HEK293 (cell line): ENCODE measurements at regions of chr1 and their contacts with region 1.

Region 1: GRCh38 chr1:59971464-59971911 is 44.9 kb upstream of the CYP2J2 start:
- H3K4me3 ChIP-seq: no peak overlapping the region
- H3K27ac ChIP-seq: no peak overlapping the region
- H3K4me1 ChIP-seq: no peaks in the 10 kb centered on the region
- CTCF ChIP-seq: peak; percentile 89

Region 2: DNA sequence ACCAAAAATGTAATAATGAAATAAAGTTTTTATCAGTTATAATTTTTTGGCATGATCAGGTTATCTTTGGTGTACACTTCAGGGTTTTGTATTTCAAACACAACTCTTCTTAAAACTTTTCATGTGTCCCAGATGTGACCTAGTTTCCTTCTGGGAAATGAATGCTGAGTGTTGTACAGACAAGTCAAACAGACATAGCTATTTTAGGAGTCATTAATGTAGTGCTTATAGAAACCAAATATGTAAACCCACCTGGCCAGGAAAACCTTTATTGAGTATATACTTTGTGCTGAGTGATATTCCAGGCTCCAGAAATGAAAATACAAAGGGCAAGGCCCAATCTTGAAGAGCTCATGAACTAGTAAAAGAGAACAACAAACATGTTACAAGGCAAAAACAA is 182.7 kb before region 1 on chr1:
- CTCF ChIA-PET with region 1: no interaction called
- POLR2A ChIA-PET with region 1: no interaction called
- H3K4me3 ChIP-seq: no peak overlapping the region
- H3K27ac ChIP-seq: no peak overlapping the region
- H3K4me1 ChIP-seq: no peaks in the 10 kb centered on the region
- CTCF ChIP-seq: no peak

Region 3: DNA sequence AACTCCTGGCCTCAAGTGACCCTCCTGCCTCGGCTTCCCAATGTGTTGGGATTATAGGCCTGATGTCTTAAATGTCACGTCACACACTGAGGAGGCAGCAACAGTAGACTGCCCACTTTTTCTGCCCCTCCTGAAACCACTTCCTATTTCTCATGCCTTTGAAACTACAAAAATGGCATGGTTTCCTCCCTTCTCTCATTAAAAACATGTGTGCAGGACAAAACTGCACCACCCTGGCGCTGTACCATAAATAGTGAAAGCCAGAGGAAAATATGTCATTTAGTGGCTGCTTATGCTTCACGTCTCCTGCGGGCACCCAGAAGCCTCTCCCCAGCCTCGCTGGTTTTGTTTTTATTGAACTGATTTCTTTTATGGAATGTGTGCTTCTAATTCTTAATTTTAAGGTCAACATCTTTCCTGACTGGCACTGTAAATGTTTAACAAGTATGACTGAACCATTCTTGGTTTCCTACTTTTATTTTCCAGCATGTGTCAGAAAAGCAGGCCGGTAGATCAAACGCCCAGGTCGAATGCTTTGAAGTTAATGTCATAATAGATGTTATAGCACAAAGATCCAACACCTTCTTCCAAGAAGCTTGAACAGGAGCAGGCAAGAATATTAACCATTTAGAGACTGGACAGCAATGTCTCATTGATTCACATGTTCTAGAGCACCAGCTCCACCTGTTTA is 161.6 kb after region 1 on chr1:
- CTCF ChIA-PET with region 1: interaction called, 10 read pairs
- POLR2A ChIA-PET with region 1: no interaction called
- H3K4me3 ChIP-seq: no peak overlapping the region
- H3K27ac ChIP-seq: no peak overlapping the region
- H3K4me1 ChIP-seq: no peaks in the 10 kb centered on the region
- CTCF ChIP-seq: no peak

Region 4: DNA sequence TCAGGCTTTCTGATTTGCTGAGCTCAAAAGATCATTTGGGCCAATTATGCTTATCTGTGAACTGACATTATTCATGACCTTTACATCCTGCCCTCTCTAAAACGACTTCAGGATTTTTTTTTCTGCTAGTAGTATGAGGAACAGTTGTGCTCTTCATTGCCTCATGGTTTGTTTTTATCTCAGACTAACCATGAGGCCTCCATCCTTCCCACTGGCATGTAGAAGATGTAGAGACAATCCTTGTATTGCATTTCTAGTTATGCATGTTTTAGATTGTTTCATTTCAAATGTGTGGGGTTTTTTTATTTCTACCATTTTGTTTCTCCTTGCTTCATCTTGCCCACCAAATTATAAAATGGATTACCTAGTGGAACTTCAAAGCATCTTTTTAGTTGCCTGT is 184.9 kb after region 1 on chr1:
- CTCF ChIA-PET with region 1: interaction called, 10 read pairs
- POLR2A ChIA-PET with region 1: no interaction called
- H3K4me3 ChIP-seq: no peak overlapping the region
- H3K27ac ChIP-seq: no peak overlapping the region
- H3K4me1 ChIP-seq: no peaks in the 10 kb centered on the region
- CTCF ChIP-seq: no peak